Mammary epithelial cell (primary cell): ENCODE measurements at regions of chr11 and their contacts with region 1.

Region 1: GRCh38 chr11:108593214-108593922 is at the start of gene EXPH5:
- DNase-seq: peak; percentile 98
- H3K4me3 ChIP-seq: peak within 1 kb of the TSS; percentile 69 to 90 (median 77)
- H3K27ac ChIP-seq: peak within 1 kb of the TSS; percentile 89
- H3K4me1 ChIP-seq: peaks cover 15% of the 10 kb centered on the region
- H3K27me3 ChIP-seq: no peaks in the 10 kb centered on the region
- CTCF ChIP-seq: peak in 1 of 2 donors; percentile 16
- total RNA-seq, gene EXPH5: 17.0 to 27.7 TPM

Region 2: DNA sequence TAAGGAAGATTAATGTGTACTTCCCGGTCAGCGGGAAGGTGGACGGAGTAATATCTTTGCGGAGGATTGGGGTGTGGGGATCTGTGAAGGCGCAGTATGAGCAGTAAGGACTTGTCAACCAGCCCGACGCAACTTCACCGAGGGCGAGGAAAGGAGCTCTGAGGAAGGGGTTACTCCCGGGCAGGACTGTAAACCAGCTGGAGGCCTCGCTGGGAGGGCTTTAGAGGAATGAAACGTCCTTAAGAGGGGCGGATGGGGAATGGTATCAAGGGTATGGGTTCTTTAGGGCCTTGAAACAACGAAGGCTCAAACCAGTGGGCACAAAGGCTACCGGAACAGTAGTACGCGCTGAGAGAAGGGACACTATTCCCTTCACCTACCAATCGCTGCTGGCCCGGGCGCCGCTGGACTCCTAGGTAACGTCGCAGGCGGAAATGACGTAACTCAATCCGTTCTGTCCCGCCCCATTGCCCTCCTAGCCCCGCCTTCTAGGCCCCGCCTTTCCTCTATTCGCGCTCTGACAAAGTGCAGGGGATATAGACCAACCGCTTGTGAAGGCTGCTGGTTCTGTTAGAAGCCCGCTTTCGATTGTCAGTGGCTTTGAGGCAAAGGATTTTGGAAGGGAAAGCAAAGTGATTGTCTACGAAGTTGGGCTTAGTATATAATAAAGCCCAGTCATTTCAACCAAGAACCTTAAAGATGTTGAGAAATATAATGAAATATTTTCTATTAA is 126.1 kb before region 1 on chr11 and contains the start of gene C11orf65:
- CTCF ChIA-PET with region 1: no interaction called
- dilution Hi-C with region 1: no loop called
- in situ Hi-C with region 1: no loop called
- intact Hi-C with region 1: loop called (anchors 2 kb)
- DNase-seq: peak; percentile 94
- H3K4me3 ChIP-seq: peak within 1 kb of the TSS; percentile 58 to 70 (median 62)
- H3K27ac ChIP-seq: peak within 1 kb of the TSS; percentile 96
- H3K4me1 ChIP-seq: no peaks in the 10 kb centered on the region
- H3K27me3 ChIP-seq: no peaks in the 10 kb centered on the region
- CTCF ChIP-seq: no peak
- total RNA-seq, gene C11orf65: 0.67 to 1.1 TPM

Region 3: DNA sequence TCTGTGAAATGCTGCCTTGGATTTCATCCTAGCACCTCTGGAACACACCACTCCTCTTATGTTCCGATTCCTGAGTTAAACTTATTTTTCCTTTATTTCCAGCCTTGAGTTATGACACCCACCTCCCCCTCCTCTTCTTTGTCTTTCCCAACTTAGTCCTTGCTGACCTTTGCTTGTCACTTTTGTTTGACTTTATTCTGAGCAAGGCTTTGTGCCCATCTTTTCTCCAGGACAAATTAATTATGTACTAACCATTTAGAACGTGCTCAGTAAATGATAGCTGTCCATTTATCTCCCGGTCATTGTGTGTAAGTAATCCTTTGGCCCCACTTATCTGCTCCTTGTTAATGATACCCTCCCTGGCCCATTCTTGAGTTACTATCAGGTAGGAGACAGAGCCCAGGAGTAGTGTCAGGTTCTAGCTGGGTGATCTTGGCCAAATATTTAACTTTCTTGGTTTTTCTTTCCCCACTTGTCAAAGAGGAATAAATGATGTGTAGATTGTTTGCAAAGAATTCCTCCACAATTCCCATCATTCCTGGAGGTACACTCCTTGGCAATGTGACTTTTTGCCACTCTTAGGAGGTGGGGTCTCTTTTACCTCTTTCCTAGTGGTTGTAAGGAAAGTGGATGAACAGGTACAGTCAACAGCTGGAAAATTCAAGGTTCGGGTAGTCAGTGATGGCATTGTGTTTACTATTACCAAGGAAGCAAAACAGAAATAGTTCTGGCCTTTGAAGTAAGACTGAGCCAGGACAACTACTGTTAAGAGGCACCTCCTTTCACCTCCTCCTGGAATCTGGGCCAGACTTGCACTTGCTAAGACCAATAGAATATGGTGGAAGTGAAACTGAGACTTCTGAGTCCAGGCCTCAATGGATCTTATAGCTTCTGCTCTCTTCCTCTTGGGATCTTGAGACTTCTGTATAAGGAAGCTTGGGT is 43.8 kb before region 1 on chr11:
- CTCF ChIA-PET with region 1: no interaction called
- dilution Hi-C with region 1: no loop called
- in situ Hi-C with region 1: no loop called
- intact Hi-C with region 1: no loop called
- DNase-seq: no peak
- H3K4me3 ChIP-seq: no peak overlapping the region
- H3K27ac ChIP-seq: no peak overlapping the region
- H3K4me1 ChIP-seq: no peaks in the 10 kb centered on the region
- H3K27me3 ChIP-seq: no peaks in the 10 kb centered on the region
- CTCF ChIP-seq: no peak

Region 4: GRCh38 chr11:108616567-108616966 is 23.2 kb after region 1 on chr11:
- CTCF ChIA-PET with region 1: no interaction called
- dilution Hi-C with region 1: no loop called
- in situ Hi-C with region 1: no loop called
- intact Hi-C with region 1: loop called (anchors 1 kb)
- DNase-seq: peak; percentile 99
- H3K4me3 ChIP-seq: no peak overlapping the region
- H3K27ac ChIP-seq: peak overlapping the region; percentile 97
- H3K4me1 ChIP-seq: peaks cover 37% of the 10 kb centered on the region
- H3K27me3 ChIP-seq: no peaks in the 10 kb centered on the region
- CTCF ChIP-seq: no peak

Region 5: GRCh38 chr11:108635071-108635470 is 41.7 kb after region 1 on chr11:
- CTCF ChIA-PET with region 1: no interaction called
- dilution Hi-C with region 1: no loop called
- in situ Hi-C with region 1: no loop called
- intact Hi-C with region 1: loop called (anchors 1 kb)
- DNase-seq: peak; percentile 89
- H3K4me3 ChIP-seq: no peak overlapping the region
- H3K27ac ChIP-seq: peak overlapping the region; percentile 48
- H3K4me1 ChIP-seq: peaks cover 15% of the 10 kb centered on the region
- H3K27me3 ChIP-seq: no peaks in the 10 kb centered on the region
- CTCF ChIP-seq: no peak

Region 6: GRCh38 chr11:108994887-108995286 is 401.5 kb after region 1 on chr11:
- CTCF ChIA-PET with region 1: no interaction called
- dilution Hi-C with region 1: no loop called
- in situ Hi-C with region 1: no loop called
- intact Hi-C with region 1: no loop called
- DNase-seq: no peak
- H3K4me3 ChIP-seq: no peak overlapping the region
- H3K27ac ChIP-seq: no peak overlapping the region
- H3K4me1 ChIP-seq: no peaks in the 10 kb centered on the region
- H3K27me3 ChIP-seq: no peaks in the 10 kb centered on the region
- CTCF ChIP-seq: no peak